HepG2 (cell line): ENCODE measurements at regions of chr18 and their contacts with region 1.

Region 1: DNA sequence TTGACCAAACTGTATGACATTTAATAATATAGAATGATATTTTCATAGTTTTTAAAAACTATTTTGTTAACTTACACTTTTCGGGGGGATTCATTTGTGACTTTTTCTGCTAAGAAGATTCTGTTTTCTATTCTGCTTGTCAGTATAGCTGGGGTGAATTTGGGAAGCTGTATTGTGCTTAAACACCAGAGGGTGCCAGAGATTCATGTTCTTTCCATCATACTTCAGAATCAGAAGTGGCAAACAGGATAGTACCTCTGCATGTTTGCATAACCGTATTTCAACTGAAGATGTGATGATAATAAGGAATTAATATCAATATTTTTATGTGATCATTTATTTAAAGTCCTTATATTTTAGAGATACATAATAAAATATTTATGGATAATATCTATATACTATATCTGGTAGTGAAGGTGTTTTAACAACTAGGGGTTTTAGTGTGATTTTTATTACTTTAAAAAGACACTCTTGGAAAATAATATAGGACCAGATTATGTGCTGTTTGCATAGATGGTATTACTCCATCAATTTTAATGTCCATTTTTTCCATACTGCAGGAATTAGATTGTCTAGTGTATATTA is 81.0 kb downstream of the TAF4B start:
- DNase-seq: peak; percentile 35
- ATAC-seq: peak; percentile 78
- H3K4me3 ChIP-seq: no peak overlapping the region
- H3K27ac ChIP-seq: no peak overlapping the region
- H3K4me1 ChIP-seq: no peaks in the 10 kb centered on the region
- H3K27me3 ChIP-seq: no peaks in the 10 kb centered on the region
- CTCF ChIP-seq: peak; percentile 68
- EP300 ChIP-seq: no peak
- POLR2A ChIP-seq: no peak
- RAD21 ChIP-seq: peak; percentile 49; the same call in 1 of the 2 replicates

Region 2: GRCh38 chr18:26335571-26336487 is 28.5 kb after region 1 on chr18:
- CTCF ChIA-PET with region 1: interaction called, 8 read pairs
- POLR2A ChIA-PET with region 1: no interaction called
- in situ Hi-C with region 1: no loop called
- intact Hi-C with region 1: loop called (anchors 1 kb)
- DNase-seq: no peak
- ATAC-seq: no peak
- H3K4me3 ChIP-seq: no peak overlapping the region
- H3K27ac ChIP-seq: no peak overlapping the region
- H3K4me1 ChIP-seq: no peaks in the 10 kb centered on the region
- H3K27me3 ChIP-seq: no peaks in the 10 kb centered on the region; a peak in 1 of 5 replicates
- CTCF ChIP-seq: no peak
- EP300 ChIP-seq: no peak
- POLR2A ChIP-seq: no peak
- RAD21 ChIP-seq: no peak

Region 3: GRCh38 chr18:26383454-26384270 is 76.4 kb after region 1 on chr18:
- CTCF ChIA-PET with region 1: no interaction called
- POLR2A ChIA-PET with region 1: no interaction called
- in situ Hi-C with region 1: no loop called
- intact Hi-C with region 1: loop called (anchors 2 kb)
- DNase-seq: peak; percentile 35
- ATAC-seq: peak; percentile 75
- H3K4me3 ChIP-seq: no peak overlapping the region
- H3K27ac ChIP-seq: no peak overlapping the region
- H3K4me1 ChIP-seq: peaks cover 15% of the 10 kb centered on the region
- H3K27me3 ChIP-seq: no peaks in the 10 kb centered on the region
- CTCF ChIP-seq: peak; percentile 63
- EP300 ChIP-seq: no peak
- POLR2A ChIP-seq: no peak
- RAD21 ChIP-seq: peak; percentile 31; the same call in 1 of the 2 replicates

Region 4: GRCh38 chr18:26454192-26454591 is 146.9 kb after region 1 on chr18:
- CTCF ChIA-PET with region 1: no interaction called
- POLR2A ChIA-PET with region 1: no interaction called
- in situ Hi-C with region 1: no loop called
- intact Hi-C with region 1: loop called (anchors 1 kb)
- DNase-seq: no peak
- ATAC-seq: no peak
- H3K4me3 ChIP-seq: no peak overlapping the region
- H3K27ac ChIP-seq: no peak overlapping the region
- H3K4me1 ChIP-seq: no peaks in the 10 kb centered on the region
- H3K27me3 ChIP-seq: no peaks in the 10 kb centered on the region
- CTCF ChIP-seq: no peak
- EP300 ChIP-seq: no peak
- POLR2A ChIP-seq: no peak
- RAD21 ChIP-seq: no peak

Region 5: GRCh38 chr18:26650310-26651268 is 343.3 kb after region 1 on chr18:
- CTCF ChIA-PET with region 1: interaction called, 12 read pairs
- POLR2A ChIA-PET with region 1: no interaction called
- in situ Hi-C with region 1: no loop called
- intact Hi-C with region 1: loop called (anchors 1 kb)
- DNase-seq: no peak
- ATAC-seq: no peak
- H3K4me3 ChIP-seq: no peak overlapping the region
- H3K27ac ChIP-seq: no peak overlapping the region
- H3K4me1 ChIP-seq: no peaks in the 10 kb centered on the region
- H3K27me3 ChIP-seq: peaks cover 3 to 36% of the 10 kb centered on the region in 2 experiments; a peak in 3 of 5 replicates
- CTCF ChIP-seq: no peak
- EP300 ChIP-seq: no peak
- POLR2A ChIP-seq: no peak
- RAD21 ChIP-seq: no peak

Region 6: GRCh38 chr18:26771524-26771923 is 464.2 kb after region 1 on chr18:
- CTCF ChIA-PET with region 1: no interaction called
- POLR2A ChIA-PET with region 1: no interaction called
- in situ Hi-C with region 1: no loop called
- intact Hi-C with region 1: loop called (anchors 1 kb)
- DNase-seq: peak; percentile 6
- ATAC-seq: peak; percentile 78
- H3K4me3 ChIP-seq: no peak overlapping the region
- H3K27ac ChIP-seq: no peak overlapping the region
- H3K4me1 ChIP-seq: no peaks in the 10 kb centered on the region
- H3K27me3 ChIP-seq: no peaks in the 10 kb centered on the region
- CTCF ChIP-seq: peak; percentile 56
- EP300 ChIP-seq: no peak
- POLR2A ChIP-seq: no peak
- RAD21 ChIP-seq: 0 out of 2 replicates have a peak, but pooled peaks have one; percentile 38